Mucosa of descending colon (tissue), 3 donors: ENCODE measurements at regions of chr2 and their contacts with region 1.

Region 1: DNA sequence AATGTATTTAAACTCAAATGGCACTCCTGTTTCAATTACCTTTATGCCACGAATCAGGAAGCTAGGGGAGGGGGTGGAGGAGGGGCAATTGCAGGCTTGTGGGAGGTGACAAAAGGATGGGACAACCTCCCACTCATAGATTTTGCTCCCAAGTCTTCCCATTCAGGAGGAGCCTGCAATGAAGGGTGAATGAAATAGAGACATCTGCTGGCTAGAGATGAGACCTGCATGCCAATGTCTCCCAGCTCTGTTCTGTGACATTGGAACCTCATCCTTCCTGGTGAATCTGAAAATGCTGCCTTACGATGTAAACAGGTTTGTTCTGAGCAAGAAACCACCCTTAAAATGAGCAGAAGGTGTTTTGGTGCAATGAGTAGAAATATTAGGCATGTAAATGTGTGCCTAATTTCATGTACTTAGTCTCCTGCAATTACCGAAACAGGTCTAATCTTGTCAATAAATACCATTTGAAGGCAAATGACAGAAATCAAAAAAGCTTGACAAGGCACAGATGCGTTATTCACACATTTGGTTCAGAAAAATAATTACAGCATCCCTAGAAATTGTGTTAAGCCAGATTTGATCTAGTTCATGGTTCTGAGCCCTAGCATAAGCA is 2.7 kb upstream of the PID1 start:
- DNase-seq: peak; percentile 73 to 90 (median 83)
- ATAC-seq: peak; percentile 91
- H3K4me3 ChIP-seq: no peak overlapping the region
- H3K4me1 ChIP-seq: peaks cover 16% of the 10 kb centered on the region
- CTCF ChIP-seq: peak; percentile 53

Region 2: GRCh38 chr2:229133155-229133772 is 140.6 kb before region 1 on chr2:
- intact Hi-C with region 1: loop called in 1 of 2 experiments (anchors 5 kb)
- DNase-seq: peak in 1 of 3 donors; percentile 69
- ATAC-seq: peak; percentile 49
- H3K4me3 ChIP-seq: no peak overlapping the region
- H3K4me1 ChIP-seq: no peaks in the 10 kb centered on the region
- CTCF ChIP-seq: peak; percentile 17

Region 3: DNA sequence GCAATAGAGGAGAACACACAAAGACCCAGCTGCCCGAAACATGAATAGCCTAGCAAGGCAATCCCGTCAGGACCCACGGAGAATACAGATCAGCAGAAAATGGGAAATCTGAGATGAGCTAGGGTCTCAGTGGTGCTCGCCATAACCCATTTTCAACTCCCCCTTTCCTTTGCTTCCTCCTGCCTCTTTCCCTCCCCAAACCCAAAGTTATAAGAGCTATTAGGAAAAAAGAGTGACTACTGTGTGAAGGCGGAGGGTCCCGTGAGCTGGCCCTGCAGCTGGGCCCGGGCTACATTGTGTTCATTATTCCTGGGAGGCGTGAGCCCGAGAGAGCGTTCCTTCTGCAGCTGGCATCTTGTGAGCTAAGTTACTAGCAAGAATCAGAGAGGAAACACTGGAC is 121.2 kb before region 1 on chr2:
- intact Hi-C with region 1: no loop called
- DNase-seq: no peak
- ATAC-seq: no peak
- H3K4me3 ChIP-seq: no peak overlapping the region
- H3K4me1 ChIP-seq: peaks cover 8% of the 10 kb centered on the region
- CTCF ChIP-seq: no peak